ENCODE measurements at regions of chr19 and their contacts with region 1.

Region 1: GRCh38 chr19:9674663-9675357 is at the start of gene ZNF562:
- DNase-seq: peak; percentile 91
- ATAC-seq: peak; percentile 78
- H3K4me3 Mint-ChIP-seq: peak within 1 kb of the TSS; percentile 94
- H3K27ac Mint-ChIP-seq: peak within 1 kb of the TSS; percentile 97
- H3K4me1 Mint-ChIP-seq: peaks cover 30% of the 10 kb centered on the region
- H3K27me3 Mint-ChIP-seq: no peaks in the 10 kb centered on the region
- total RNA-seq, gene ZNF562: 29.9 to 39.7 TPM

Region 2: DNA sequence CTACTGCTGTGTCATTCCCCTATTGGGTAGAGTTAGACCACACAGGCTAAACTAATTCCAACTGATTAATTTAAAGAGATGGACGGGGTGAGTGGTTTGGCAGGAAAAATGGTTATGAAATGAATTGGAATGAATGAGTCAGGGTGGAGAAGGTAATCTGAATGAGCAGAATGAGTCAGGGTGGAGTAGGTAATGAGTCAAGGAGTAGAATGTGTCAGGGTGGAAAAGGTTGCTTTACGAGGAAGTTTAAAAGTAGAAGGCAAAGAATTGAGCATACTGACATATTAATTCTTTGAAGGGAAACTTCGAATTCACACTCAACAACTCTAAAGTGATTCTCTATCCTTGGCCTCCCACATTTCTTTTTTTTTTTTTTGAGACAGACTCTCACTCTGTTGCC is 77.8 kb before region 1 on chr19:
- CTCF ChIA-PET with region 1: no interaction called
- POLR2A ChIA-PET with region 1: no interaction called
- intact Hi-C with region 1: loop called in 1 of 2 experiments (anchors 1 kb)
- DNase-seq: no peak
- ATAC-seq: peak; percentile 94
- H3K4me3 Mint-ChIP-seq: no peak overlapping the region
- H3K27ac Mint-ChIP-seq: peak overlapping the region; percentile 80
- H3K4me1 Mint-ChIP-seq: peaks cover 9% of the 10 kb centered on the region
- H3K27me3 Mint-ChIP-seq: peaks cover 6% of the 10 kb centered on the region

Region 3: DNA sequence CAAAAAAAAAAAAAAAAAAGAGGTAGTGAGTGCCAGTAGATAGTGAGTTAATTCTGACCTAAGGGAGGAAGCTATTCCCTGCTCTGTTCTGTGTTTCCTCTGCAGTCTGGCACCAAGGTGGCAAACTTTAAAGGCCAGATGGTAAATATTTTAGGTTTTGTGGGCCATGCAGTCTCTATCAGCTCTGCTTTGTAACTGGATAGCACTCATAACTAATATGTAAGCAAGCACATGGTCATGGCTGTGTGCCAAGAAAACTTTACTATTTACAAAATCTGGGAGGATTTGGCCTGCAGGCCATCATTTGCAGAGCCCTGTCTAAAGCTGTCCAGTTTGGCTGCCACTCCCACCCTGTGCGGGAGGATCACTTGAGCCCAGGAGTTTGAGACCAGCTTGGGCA is 164.6 kb after region 1 on chr19:
- CTCF ChIA-PET with region 1: no interaction called
- POLR2A ChIA-PET with region 1: no interaction called
- intact Hi-C with region 1: no loop called
- DNase-seq: no peak
- ATAC-seq: no peak
- H3K4me3 Mint-ChIP-seq: no peak overlapping the region
- H3K27ac Mint-ChIP-seq: no peak overlapping the region
- H3K4me1 Mint-ChIP-seq: peaks cover 15% of the 10 kb centered on the region
- H3K27me3 Mint-ChIP-seq: no peaks in the 10 kb centered on the region

Measured in activated CD4-positive, alpha-beta T cell treated with anti-CD3 and anti-CD28 coated beads for 36 hours (primary cell).